CD4-positive, alpha-beta T cell (primary cell): ENCODE measurements at regions of chr6 and their contacts with region 1.

Region 1: DNA sequence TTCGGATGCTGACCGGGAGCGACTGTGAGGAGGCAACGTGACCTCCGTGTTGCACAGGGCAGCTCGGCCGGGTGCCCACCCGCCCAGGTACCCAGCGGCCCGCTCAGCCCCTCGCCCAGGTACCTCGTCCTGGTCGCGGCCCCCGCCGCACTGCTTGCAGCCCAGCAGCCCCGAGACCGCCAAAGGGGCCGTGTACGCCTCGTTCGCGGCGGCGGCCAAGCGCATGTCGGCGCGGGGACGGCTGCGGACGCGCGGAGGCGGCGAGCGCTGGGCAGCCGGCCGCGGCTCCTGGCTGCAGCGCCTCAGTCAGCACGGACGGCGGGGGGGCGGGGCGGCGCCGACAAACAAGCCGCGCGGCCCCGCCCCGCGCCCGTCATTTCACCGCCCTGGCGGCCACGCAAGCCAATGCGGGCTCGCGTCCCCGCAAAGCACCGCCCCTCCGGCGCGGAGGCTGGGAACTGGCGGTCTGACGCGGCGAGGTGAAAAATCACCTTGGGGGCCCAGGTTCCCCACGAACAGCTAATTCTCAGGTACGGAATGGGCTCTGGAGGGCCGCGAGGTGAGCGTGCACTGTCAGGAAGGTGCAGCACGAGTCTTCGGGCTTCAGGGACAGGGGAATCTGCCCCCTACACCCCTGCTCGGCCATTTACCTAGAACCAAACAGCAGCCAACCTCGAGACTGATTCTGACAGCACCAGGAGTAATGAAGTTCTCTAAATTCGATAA is 85.2 kb downstream of the SESN1 start:
- DNase-seq: peak; percentile 81 to 97 (median 90)
- ATAC-seq: peak; percentile 94
- H3K4me3 ChIP-seq: peak overlapping the region; percentile 93
- H3K4me3 Mint-ChIP-seq: peak overlapping the region; percentile 100
- H3K27ac ChIP-seq: peak overlapping the region; percentile 84 to 92
- H3K27ac Mint-ChIP-seq: peak overlapping the region; percentile 99
- H3K4me1 ChIP-seq: peaks cover 18% of the 10 kb centered on the region
- H3K4me1 Mint-ChIP-seq: peaks cover 73% of the 10 kb centered on the region
- H3K27me3 ChIP-seq: no peaks in the 10 kb centered on the region
- H3K27me3 Mint-ChIP-seq: no peaks in the 10 kb centered on the region
- CTCF ChIP-seq: peak; percentile 14

Region 2: GRCh38 chr6:108848116-108848868 is 161.1 kb before region 1 on chr6 and contains the start of gene ARMC2:
- CTCF ChIA-PET with region 1: no interaction called
- POLR2A ChIA-PET with region 1: interaction called, 12 read pairs
- intact Hi-C with region 1: loop called in 1 of 2 experiments (anchors 5 kb)
- DNase-seq: peak; percentile 69 to 94 (median 80)
- ATAC-seq: peak; percentile 78
- H3K4me3 ChIP-seq: peak within 1 kb of the TSS; percentile 67
- H3K4me3 Mint-ChIP-seq: peak within 1 kb of the TSS; percentile 92
- H3K27ac ChIP-seq: peak within 1 kb of the TSS; percentile 54 to 61
- H3K27ac Mint-ChIP-seq: peak within 1 kb of the TSS; percentile 88
- H3K4me1 ChIP-seq: peaks cover 16% of the 10 kb centered on the region
- H3K4me1 Mint-ChIP-seq: peaks cover 35% of the 10 kb centered on the region
- H3K27me3 ChIP-seq: no peaks in the 10 kb centered on the region
- H3K27me3 Mint-ChIP-seq: no peaks in the 10 kb centered on the region
- CTCF ChIP-seq: no peak
- total RNA-seq, gene ARMC2: 5.2 to 5.7 TPM

Region 3: DNA sequence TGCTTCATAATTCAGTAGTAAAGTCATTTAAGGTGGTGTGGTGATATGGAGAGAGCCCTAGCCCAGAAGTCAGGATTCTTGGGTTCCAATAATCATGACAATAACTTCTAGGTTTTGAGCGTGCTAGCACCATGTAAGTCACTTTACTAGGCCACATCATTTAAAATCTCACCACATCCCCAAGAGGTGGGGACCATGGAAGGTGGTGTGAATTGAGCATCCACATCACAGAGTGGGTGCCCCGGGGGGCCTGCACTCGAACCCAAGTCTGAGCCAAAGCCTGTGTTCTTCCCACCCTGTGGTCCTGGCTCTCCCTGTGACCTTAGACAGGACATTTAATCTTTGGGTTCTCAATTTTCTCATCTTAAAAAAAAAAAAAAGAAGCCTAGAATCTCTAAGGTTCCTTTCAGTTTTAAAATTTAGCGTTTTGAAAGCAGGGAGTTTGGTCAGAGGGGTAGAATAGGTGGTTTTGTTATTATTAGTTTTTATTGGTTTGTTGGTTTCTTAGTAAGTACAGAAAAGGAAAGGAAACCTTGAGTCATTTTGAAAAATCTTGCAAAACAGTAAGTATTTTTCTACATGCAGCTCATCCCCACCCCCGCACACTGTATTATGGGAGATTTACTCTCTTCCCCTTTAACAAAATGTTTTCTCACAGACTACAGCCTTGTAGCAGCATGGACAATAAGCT is 134.8 kb before region 1 on chr6:
- CTCF ChIA-PET with region 1: no interaction called
- POLR2A ChIA-PET with region 1: no interaction called
- intact Hi-C with region 1: no loop called
- DNase-seq: peak in 7 of 14 experiments; percentile 5 to 72 (median 49)
- ATAC-seq: peak; percentile 47
- H3K4me3 ChIP-seq: peak overlapping the region; percentile 41
- H3K4me3 Mint-ChIP-seq: peak overlapping the region; percentile 69
- H3K27ac ChIP-seq: peak overlapping the region in 1 of 2 donors; percentile 76
- H3K27ac Mint-ChIP-seq: peak overlapping the region; percentile 84
- H3K4me1 ChIP-seq: peaks cover 42% of the 10 kb centered on the region
- H3K4me1 Mint-ChIP-seq: peaks cover 39% of the 10 kb centered on the region
- H3K27me3 ChIP-seq: no peaks in the 10 kb centered on the region
- H3K27me3 Mint-ChIP-seq: no peaks in the 10 kb centered on the region
- CTCF ChIP-seq: no peak

Region 4: GRCh38 chr6:109036574-109037294 is 27.3 kb after region 1 on chr6:
- CTCF ChIA-PET with region 1: interaction called, 8 read pairs
- POLR2A ChIA-PET with region 1: interaction called, 26 read pairs
- intact Hi-C with region 1: no loop called
- DNase-seq: peak in 3 of 14 experiments; percentile 40 to 75 (median 44)
- ATAC-seq: peak; percentile 51
- H3K4me3 ChIP-seq: no peak overlapping the region
- H3K4me3 Mint-ChIP-seq: peak overlapping the region; percentile 31
- H3K27ac ChIP-seq: peak overlapping the region in 1 of 2 donors; percentile 38
- H3K27ac Mint-ChIP-seq: peak overlapping the region; percentile 71
- H3K4me1 ChIP-seq: peaks cover 22% of the 10 kb centered on the region
- H3K4me1 Mint-ChIP-seq: peaks cover 63% of the 10 kb centered on the region
- H3K27me3 ChIP-seq: no peaks in the 10 kb centered on the region
- H3K27me3 Mint-ChIP-seq: no peaks in the 10 kb centered on the region
- CTCF ChIP-seq: no peak

Region 5: GRCh38 chr6:109059571-109060021 is 50.2 kb after region 1 on chr6:
- CTCF ChIA-PET with region 1: interaction called, 3 read pairs
- POLR2A ChIA-PET with region 1: interaction called, 14 read pairs
- intact Hi-C with region 1: loop called in 1 of 2 experiments (anchors 2 kb)
- DNase-seq: peak in 4 of 14 experiments; percentile 21 to 83 (median 78)
- ATAC-seq: peak; percentile 99
- H3K4me3 ChIP-seq: no peak overlapping the region
- H3K4me3 Mint-ChIP-seq: peak overlapping the region; percentile 11
- H3K27ac ChIP-seq: peak overlapping the region; percentile 29 to 63
- H3K27ac Mint-ChIP-seq: peak overlapping the region; percentile 79
- H3K4me1 ChIP-seq: peaks cover 18% of the 10 kb centered on the region
- H3K4me1 Mint-ChIP-seq: peaks cover 67% of the 10 kb centered on the region
- H3K27me3 ChIP-seq: no peaks in the 10 kb centered on the region
- H3K27me3 Mint-ChIP-seq: no peaks in the 10 kb centered on the region
- CTCF ChIP-seq: no peak

Region 6: GRCh38 chr6:109793793-109794192 is 784.4 kb after region 1 on chr6:
- CTCF ChIA-PET with region 1: no interaction called
- POLR2A ChIA-PET with region 1: no interaction called
- intact Hi-C with region 1: no loop called
- DNase-seq: peak in 1 of 14 experiments; percentile 17
- ATAC-seq: no peak
- H3K4me3 ChIP-seq: no peak overlapping the region
- H3K4me3 Mint-ChIP-seq: no peak overlapping the region
- H3K27ac ChIP-seq: no peak overlapping the region
- H3K27ac Mint-ChIP-seq: no peak overlapping the region
- H3K4me1 ChIP-seq: no peaks in the 10 kb centered on the region
- H3K4me1 Mint-ChIP-seq: no peaks in the 10 kb centered on the region
- H3K27me3 ChIP-seq: no peaks in the 10 kb centered on the region
- H3K27me3 Mint-ChIP-seq: no peaks in the 10 kb centered on the region
- CTCF ChIP-seq: no peak